ENCODE measurements at regions of chr16 and their contacts with region 1.

Region 1: DNA sequence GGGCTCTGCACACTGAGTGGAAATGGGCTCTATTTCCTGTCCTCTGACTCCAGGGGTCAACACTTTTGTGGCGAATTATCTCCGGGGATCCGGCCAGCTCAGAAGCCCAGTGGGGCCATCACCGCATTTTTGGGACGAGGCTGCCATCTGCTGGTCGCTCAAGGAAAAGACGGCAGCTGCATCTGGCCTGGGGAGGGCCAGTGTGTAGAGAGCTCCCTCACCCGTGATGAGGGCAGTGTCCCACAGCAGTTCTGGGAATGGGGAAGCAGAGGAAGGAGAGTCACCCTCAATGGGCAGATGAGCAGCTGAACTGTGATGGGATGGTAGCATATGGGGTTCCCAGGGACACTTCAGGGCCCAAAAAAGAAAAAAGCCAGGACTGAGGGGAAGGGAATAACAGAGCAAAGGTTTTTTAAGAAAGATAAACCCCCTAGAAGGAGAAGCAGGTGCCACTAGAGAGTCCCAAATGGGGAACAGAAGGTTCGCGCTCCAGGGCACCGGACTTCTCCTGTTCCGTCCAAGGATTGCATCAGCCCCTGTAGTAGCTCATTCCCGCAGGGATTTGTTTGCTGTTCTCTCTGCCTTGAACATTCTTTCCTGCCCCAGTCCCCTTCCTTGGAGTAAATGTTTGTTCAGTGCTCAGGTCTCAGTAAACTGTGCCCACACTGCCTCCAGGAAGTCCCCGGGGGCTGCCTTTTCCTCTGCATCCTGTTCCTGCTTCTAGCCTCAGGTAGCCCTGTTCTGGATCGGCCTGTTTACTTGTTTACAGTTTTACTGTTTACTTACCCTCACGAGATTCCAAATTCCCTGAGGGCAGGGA is 9.3 kb upstream of the ABCC12 start:
- DNase-seq: peak; percentile 82 to 83
- ATAC-seq: peak; percentile 84 to 95
- H3K4me3 ChIP-seq: peak overlapping the region; percentile 17; the same call in 2 of the 3 replicates
- H3K27ac ChIP-seq: peak overlapping the region; percentile 89 to 91
- H3K4me1 ChIP-seq: peaks cover 21% of the 10 kb centered on the region
- CTCF ChIP-seq: peak; percentile 87
- EP300 ChIP-seq: no peak
- POLR2A ChIP-seq: no peak
- RAD21 ChIP-seq: peak; percentile 98 to 99

Region 2: DNA sequence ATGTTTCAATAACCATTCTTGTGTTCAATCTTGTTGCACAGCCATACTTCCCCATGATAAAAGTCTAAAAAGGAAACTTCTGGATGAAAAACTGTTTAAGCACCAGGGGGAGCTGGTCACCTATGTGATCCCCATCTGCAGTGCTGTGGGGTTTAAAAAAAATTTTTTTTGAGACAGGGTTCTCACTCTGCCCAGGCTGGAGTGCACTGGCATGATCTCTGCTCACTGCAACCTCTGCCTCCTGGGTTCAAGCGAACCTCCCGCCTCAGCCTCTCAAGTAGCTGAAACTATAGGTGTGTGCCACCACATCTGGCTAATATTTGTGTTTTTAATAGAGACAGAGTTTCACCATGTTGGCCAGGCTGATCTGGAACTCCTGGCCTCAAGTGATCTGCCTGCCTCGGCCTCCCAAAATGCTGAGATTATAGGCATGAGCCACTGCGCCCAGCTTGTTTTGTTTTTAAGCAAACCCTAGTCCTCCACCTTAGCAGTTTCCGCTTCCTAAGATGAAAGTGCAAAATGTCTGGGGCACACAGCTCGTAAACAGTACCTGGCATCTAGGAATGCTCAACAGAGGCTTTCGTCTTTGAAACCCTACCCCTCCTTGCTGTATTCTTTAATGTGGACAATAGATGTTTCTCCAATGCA is 1217.1 kb before region 1 on chr16:
- CTCF ChIA-PET with region 1: interaction called, 21 read pairs
- POLR2A ChIA-PET with region 1: no interaction called
- DNase-seq: peak; percentile 38 to 55
- ATAC-seq: peak; percentile 90 to 91
- H3K4me3 ChIP-seq: no peak overlapping the region
- H3K27ac ChIP-seq: no peak overlapping the region
- H3K4me1 ChIP-seq: no peaks in the 10 kb centered on the region
- CTCF ChIP-seq: peak; percentile 79
- EP300 ChIP-seq: no peak
- POLR2A ChIP-seq: no peak
- RAD21 ChIP-seq: peak; percentile 87 to 88

Region 3: DNA sequence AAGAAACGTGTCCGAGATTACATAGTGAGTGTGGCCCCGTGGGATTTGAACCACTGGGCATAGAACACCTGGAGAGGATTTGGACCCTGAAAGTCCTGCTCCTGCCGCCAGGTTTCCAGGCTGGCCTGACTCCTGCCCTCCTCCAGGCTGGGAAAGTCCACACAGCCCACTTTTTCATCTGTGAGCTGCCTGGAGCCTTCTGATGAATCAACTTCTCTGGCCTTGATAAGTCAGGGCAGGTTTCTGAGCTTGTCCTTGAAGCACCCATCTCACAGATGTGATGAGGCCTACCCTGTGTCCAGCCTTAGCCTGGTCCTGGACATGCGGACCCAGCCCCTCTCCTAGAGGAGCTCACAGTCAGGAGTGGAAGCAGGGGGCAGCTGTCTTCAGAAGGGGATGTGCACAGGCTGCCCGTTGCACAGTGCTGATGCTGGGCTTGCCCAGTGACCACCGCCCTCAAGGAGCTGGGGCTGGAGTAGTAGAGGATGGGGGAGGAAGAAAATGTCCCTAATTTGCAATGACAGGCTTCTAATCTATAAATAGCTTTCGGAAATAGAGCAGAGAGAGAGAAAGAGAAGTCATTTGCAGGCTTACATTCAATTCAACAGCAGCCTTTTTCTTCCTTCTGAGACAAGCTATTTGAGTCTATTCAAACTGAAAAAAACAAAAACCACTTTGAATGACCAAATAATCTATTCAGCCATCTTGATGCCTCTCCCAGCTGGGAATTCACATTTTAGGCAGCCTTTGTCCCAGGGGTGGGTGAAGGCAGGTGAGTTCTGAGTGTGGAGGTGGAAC is 1118.2 kb before region 1 on chr16:
- CTCF ChIA-PET with region 1: interaction called, 16 read pairs
- POLR2A ChIA-PET with region 1: no interaction called
- DNase-seq: no peak
- ATAC-seq: no peak
- H3K4me3 ChIP-seq: no peak overlapping the region
- H3K27ac ChIP-seq: no peak overlapping the region
- H3K4me1 ChIP-seq: no peaks in the 10 kb centered on the region
- CTCF ChIP-seq: no peak
- EP300 ChIP-seq: no peak
- POLR2A ChIP-seq: no peak
- RAD21 ChIP-seq: no peak

Region 4: DNA sequence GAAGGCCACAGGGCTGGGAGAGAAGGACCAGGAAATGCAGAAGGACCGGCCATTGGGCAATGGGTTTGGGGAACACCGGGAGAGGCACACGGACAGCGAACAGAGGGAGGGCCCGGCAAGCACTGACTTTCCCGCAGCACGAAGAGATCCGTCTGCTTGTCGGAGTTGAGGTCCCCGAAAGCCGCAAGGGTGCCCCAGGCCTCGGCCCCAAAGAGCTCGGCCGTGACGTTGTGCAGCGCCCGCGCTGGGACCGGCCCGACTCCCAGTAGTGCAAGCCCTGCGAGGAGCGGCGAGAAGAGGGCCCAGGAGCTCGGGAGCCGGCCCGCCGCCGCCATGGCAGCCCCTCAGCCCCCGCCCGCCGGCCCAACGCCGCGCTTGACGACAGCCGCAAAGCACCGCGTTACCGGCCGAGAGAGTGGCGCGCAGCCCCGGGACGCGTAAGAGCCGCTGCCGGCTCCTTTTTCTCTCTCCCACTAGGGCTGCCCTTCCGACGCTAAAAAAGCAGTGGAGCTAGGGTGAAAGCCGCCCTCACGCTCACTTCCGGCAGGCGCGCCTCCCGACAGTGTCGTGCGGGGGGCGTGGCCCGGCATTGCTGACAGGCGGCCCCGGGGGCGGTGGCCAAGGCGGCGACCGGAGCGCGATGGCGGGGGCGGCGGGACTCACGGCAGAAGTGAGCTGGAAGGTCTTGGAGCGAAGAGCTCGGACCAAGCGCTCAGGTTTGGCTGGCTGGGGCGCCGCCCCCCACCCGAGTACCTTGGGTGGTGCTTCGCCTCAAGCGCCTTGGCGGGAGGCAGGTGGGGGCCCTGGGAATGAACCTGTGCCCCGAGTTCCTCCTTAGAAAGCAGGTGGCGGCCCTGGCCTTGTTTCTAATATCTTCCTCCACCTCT is 704.2 kb before region 1 on chr16 and contains the starts of genes ITFG1 and PHKB:
- CTCF ChIA-PET with region 1: interaction called, 10 read pairs
- POLR2A ChIA-PET with region 1: interaction called, 6 read pairs
- DNase-seq: peak; percentile 56 to 94
- ATAC-seq: peak; percentile 83 to 90
- H3K4me3 ChIP-seq: peak within 1 kb of the TSS; percentile 80
- H3K27ac ChIP-seq: peak within 1 kb of the TSS; percentile 94 to 97
- H3K4me1 ChIP-seq: peaks cover 17% of the 10 kb centered on the region
- CTCF ChIP-seq: no peak
- EP300 ChIP-seq: no peak
- POLR2A ChIP-seq: peak; percentile 66
- RAD21 ChIP-seq: 0 out of 5 replicates have a peak, but pooled peaks have one; percentile 6 to 12
- polyA plus RNA-seq, gene ITFG1: 112 and 124 TPM in 2 replicates
- polyA plus RNA-seq, gene PHKB: 81.1 and 96.8 TPM in 2 replicates

Region 5: GRCh38 chr16:48176635-48177408 is 11.7 kb after region 1 on chr16:
- CTCF ChIA-PET with region 1: interaction called, 29 read pairs
- POLR2A ChIA-PET with region 1: no interaction called
- DNase-seq: no peak
- ATAC-seq: no peak; a peak in 1 of 6 replicates
- H3K4me3 ChIP-seq: no peak overlapping the region
- H3K27ac ChIP-seq: no peak overlapping the region
- H3K4me1 ChIP-seq: no peaks in the 10 kb centered on the region
- CTCF ChIP-seq: no peak
- EP300 ChIP-seq: no peak
- POLR2A ChIP-seq: no peak
- RAD21 ChIP-seq: no peak

Region 6: GRCh38 chr16:48310908-48311641 is 146.0 kb after region 1 on chr16:
- CTCF ChIA-PET with region 1: no interaction called
- POLR2A ChIA-PET with region 1: no interaction called
- DNase-seq: no peak
- ATAC-seq: no peak
- H3K4me3 ChIP-seq: no peak overlapping the region
- H3K27ac ChIP-seq: no peak overlapping the region
- H3K4me1 ChIP-seq: no peaks in the 10 kb centered on the region
- CTCF ChIP-seq: no peak
- EP300 ChIP-seq: no peak
- POLR2A ChIP-seq: no peak
- RAD21 ChIP-seq: no peak

Region 7: DNA sequence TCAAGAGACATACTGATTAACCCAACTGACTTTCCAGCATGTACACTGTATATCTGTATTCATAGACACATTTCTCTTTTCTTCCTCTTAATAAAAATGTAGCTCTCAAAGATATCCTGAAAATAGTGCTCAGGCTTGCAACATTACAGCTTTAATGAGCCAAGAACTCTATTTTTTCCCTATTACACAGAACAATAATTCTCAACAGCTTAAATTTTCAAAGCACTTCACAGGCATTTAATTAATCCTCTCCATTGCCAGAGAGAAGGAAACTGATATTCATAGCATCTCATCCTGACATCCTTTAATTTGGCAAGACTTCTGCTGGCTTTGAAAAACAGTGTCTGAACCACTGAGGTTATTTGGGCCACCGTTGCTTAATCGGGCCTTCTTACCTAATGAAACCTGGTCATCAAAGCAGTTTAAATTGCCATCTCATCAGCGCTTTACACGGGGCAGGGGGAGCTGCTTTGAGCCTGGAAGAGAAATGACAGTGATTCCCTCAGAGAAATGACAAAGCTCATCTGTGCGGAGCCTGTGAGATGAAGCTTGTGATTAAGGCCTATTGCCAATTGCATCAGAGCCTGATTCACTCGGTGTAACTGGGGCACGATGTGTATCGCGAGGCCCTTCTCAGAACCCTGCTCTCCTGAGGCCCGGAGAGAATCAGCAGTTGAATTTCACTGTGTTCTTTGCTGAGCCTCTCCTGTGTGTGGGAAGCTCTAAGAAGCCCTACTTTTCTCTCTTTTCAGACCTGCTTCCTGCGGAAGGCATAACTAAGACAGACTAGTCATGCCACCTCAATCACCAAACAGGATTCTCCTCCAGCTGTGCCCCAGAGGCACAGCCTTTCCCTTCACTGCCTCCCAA is 228.6 kb after region 1 on chr16:
- CTCF ChIA-PET with region 1: no interaction called
- POLR2A ChIA-PET with region 1: no interaction called
- DNase-seq: no peak
- ATAC-seq: 0 out of 6 replicates have a peak, but pooled peaks of 1 of the 2 experiments have one; percentile 32
- H3K4me3 ChIP-seq: no peak overlapping the region
- H3K27ac ChIP-seq: no peak overlapping the region
- H3K4me1 ChIP-seq: peaks cover 12% of the 10 kb centered on the region
- CTCF ChIP-seq: no peak
- EP300 ChIP-seq: no peak
- POLR2A ChIP-seq: no peak
- RAD21 ChIP-seq: no peak

Region 8: GRCh38 chr16:48632137-48632774 is 467.1 kb after region 1 on chr16:
- CTCF ChIA-PET with region 1: interaction called, 12 read pairs
- POLR2A ChIA-PET with region 1: no interaction called
- DNase-seq: peak in 1 of 2 experiments; percentile 33
- ATAC-seq: peak; percentile 54 to 65; a peak in 5 of 6 replicates
- H3K4me3 ChIP-seq: no peak overlapping the region
- H3K27ac ChIP-seq: peak overlapping the region in 1 of 2 experiments; percentile 60; a peak in 1 of 6 replicates
- H3K4me1 ChIP-seq: peaks cover 10% of the 10 kb centered on the region
- CTCF ChIP-seq: no peak
- EP300 ChIP-seq: no peak
- POLR2A ChIP-seq: no peak
- RAD21 ChIP-seq: no peak

Measured in A549 (cell line).